Naive thymus-derived CD8-positive, alpha-beta T cell (primary cell): ENCODE measurements at regions of chr19 and their contacts with region 1.

Region 1: DNA sequence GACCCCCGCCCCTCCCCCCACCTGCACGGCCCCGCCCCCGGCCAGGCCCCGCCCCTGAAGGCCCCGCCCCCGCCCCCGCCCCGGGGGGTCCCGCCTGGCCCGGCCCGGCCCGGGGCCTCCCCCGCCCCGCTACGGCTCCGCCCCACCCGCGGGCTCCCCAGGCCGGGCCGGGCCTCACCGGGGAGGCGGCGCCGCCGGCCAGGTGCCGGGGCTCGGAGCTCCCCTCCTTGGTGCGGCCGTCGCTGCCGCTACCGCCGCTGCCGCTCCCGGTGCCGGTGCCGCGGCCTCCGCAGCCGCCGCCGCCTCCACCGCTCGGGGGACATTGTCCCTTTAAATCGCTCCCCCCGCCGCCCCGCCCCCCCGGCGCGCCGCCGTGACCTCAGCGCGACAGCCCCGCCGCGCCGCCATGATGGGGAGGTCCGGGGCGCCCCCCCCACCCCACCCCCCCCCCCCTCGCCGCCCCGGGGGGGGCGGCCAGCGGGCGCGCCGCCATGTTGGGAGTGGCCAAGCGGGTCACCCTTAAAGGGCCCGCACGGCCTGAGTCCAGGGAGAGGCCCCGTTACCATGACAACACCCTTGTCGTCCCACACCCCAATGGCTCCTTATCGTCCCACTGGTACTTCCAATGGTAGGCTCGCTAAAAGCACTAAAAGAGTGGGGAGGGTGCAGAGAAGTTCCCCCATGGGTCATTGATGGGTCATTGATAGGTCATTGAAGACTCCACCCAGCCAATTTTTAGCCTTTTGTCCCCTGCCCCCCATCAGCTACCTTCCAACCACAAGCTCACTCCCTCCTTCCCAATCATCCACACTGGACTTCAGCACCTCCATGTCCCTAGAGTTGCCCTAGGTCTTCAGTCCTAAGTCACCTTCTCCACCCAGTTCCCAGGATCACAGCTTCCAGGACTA is at the start of gene WIZ:
- DNase-seq: peak; percentile 78 to 92 (median 85)
- ATAC-seq: peak; percentile 80 to 85
- H3K4me3 Mint-ChIP-seq: peak within 1 kb of the TSS; percentile 71 to 90 (median 84)
- H3K27ac Mint-ChIP-seq: peak within 1 kb of the TSS; percentile 83 to 97 (median 94)
- H3K4me1 Mint-ChIP-seq: peaks cover 20 to 44% (median 30%) of the 10 kb centered on the region in 4 donors
- H3K27me3 Mint-ChIP-seq: no peaks in the 10 kb centered on the region
- polyA plus RNA-seq, gene WIZ: 0.57 to 2.0 (median 0.75) TPM

Region 2: GRCh38 chr19:15432629-15433518 is 17.0 kb before region 1 on chr19:
- POLR2A ChIA-PET with region 1: interaction called, 20 read pairs
- DNase-seq: peak; percentile 83 to 94 (median 90)
- ATAC-seq: peak; percentile 89 to 94
- H3K4me3 Mint-ChIP-seq: peak overlapping the region; percentile 88 to 99 (median 94)
- H3K27ac Mint-ChIP-seq: peak overlapping the region; percentile 84 to 99 (median 95)
- H3K4me1 Mint-ChIP-seq: peaks cover 19 to 34% (median 29%) of the 10 kb centered on the region in 4 donors
- H3K27me3 Mint-ChIP-seq: no peaks in the 10 kb centered on the region

Region 3: DNA sequence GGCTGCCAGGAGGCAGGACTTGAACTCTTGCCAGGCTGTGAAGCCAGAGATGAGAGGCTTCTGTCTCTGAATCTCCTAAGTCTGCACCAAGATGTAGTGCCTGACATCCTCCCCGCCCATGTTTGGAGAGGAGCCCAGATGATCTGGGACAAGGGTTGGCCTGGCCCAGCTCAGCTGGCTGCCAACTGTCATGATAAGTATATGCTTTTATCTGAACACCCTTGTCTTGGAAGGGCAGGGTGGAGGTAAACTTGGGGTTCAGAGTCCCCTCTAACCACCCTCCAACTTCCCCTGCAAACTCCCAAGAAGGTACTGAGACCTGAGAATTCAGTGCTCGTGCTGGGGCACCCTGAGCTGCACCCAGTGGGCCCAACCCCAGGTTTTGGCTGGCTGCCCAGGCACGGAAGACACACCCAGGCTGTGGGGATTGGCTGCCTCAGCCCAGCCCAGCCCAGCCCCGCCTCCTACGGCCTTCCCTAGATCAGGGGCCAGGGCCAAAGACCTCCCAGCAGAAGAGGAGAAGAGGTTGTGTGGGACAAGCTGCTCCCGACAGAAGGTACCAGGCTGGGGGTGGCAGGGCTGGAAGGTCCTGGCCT is 222.8 kb after region 1 on chr19 and contains the start of gene CYP4F12:
- POLR2A ChIA-PET with region 1: no interaction called
- DNase-seq: peak in 8 of 10 donors; percentile 3 to 70 (median 30)
- ATAC-seq: peak; percentile 77 to 78
- H3K4me3 Mint-ChIP-seq: peak within 1 kb of the TSS in 6 of 10 donors; percentile 22 to 71 (median 40)
- H3K27ac Mint-ChIP-seq: peak within 1 kb of the TSS; percentile 46 to 91 (median 80)
- H3K4me1 Mint-ChIP-seq: peaks cover 19 to 39% (median 25%) of the 10 kb centered on the region in 4 donors
- H3K27me3 Mint-ChIP-seq: peaks cover 0 to 4% (median 0%) of the 10 kb centered on the region in 5 donors
- polyA plus RNA-seq, gene CYP4F12: not detected